Right cardiac atrium (tissue), 5 donors: ENCODE measurements at regions of chr2 and their contacts with region 1.

Region 1: GRCh38 chr2:29923110-29923721 is 1.8 kb upstream of the ALK start:
- DNase-seq: peak; percentile 60 to 84 (median 63)
- ATAC-seq: no peak
- H3K4me3 ChIP-seq: no peak overlapping the region
- H3K27ac ChIP-seq: no peak overlapping the region
- H3K4me1 ChIP-seq: peaks cover 5% of the 10 kb centered on the region
- H3K27me3 ChIP-seq: no peaks in the 10 kb centered on the region

Region 2: DNA sequence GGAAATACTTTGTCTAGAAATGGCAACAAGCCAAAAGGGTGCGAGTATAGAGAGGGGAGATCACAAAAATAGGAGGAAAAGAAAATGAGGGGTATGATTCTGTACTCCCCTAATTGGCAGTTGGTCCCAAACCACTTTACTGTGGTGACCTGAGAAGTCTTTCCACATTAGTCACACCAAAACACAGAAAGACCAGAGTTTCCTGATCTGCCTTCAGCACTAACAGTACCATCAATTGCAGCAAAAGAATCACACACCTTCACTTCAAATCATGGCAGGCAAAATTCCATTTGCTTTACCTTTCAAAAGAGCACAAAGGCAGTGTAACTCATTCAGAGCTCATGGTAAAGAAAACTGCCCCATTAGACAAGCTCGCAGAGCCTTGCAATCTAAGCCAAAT is 88.6 kb before region 1 on chr2:
- intact Hi-C with region 1: no loop called
- DNase-seq: no peak
- ATAC-seq: no peak
- H3K4me3 ChIP-seq: no peak overlapping the region
- H3K27ac ChIP-seq: no peak overlapping the region
- H3K4me1 ChIP-seq: no peaks in the 10 kb centered on the region
- H3K27me3 ChIP-seq: no peaks in the 10 kb centered on the region

Region 3: DNA sequence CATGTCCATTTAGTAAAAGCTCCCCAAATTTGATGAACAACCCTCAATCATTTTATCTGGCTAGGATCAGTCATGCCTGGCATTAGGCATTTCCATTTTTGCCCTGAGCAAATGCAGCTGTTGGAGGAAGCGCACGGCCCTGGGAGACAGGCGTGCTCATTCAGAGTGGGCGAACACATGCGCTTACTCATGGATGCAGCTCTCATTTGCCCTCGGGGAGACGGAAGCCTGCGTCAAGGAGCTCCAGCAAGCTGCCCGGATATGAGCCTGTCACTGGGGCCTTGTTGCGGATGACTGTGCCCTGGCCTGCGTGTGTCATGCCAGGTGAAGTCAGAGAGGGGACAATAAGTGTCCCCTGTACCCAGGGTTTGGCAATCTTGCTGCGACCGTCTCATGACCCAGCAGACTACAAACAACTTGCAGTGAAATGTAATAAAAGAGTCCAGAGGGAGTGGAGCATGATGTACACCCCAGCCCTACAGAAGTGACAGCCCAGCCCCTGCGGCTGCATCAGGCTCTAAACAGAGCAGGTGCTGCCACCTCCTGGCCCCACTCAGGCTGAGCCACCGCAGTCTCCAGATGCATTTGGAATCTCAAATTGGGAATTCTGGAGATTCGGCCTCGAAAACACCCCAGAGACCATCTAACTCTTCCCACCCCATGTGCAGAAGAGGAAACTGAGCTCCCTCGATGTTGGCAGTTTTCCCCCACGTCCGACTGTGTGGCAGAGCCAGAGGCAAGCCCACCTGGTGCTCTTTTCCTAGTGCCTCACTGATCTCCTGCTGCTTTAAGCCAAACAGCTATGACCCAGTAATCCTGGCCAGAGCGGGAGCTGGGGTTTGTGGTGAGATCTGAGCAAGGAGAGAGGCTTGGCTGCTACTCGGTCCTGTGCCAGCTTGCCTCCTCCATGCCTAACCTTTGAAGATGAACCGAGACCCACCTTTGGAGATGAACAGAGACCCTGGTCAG is 103.2 kb after region 1 on chr2:
- intact Hi-C with region 1: loop called in 3 of 4 experiments (anchors 5 kb)
- DNase-seq: peak; percentile 47 to 82 (median 76)
- ATAC-seq: peak; percentile 70 to 77
- H3K4me3 ChIP-seq: no peak overlapping the region
- H3K27ac ChIP-seq: no peak overlapping the region
- H3K4me1 ChIP-seq: no peaks in the 10 kb centered on the region
- H3K27me3 ChIP-seq: peaks cover 2% of the 10 kb centered on the region

Region 4: DNA sequence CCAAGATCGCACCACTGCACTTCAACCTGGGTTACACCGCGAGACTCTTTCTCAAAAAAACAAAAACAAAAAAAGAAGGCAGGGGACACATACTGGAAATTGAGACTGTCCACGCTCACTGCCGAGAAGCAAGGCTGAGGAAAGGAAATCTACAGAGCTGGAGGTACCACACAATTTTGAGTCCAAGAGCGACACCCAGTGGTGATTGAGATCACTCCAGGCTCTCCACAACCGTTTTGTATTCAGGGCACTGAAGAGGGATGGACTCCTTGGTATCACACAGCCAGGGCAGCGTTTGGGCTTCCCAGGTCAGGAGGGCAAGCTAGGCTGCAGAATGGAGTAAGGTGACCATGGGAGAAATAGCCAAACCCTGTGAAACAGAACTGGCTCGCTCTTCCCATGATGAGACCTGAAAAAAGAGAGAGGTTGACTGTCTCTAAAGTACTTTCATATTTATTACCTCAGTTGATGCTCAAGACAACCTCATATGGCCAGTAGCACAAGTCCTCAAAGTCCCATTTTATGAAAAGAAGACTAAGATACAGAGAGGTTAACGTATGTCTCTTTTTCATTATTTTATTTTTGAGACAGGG is 149.1 kb after region 1 on chr2:
- intact Hi-C with region 1: loop called in 1 of 4 experiments (anchors 5 kb)
- DNase-seq: peak in 2 of 3 donors; percentile 48 to 76
- ATAC-seq: peak; percentile 82 to 90
- H3K4me3 ChIP-seq: no peak overlapping the region
- H3K27ac ChIP-seq: no peak overlapping the region
- H3K4me1 ChIP-seq: no peaks in the 10 kb centered on the region
- H3K27me3 ChIP-seq: no peaks in the 10 kb centered on the region

Region 5: DNA sequence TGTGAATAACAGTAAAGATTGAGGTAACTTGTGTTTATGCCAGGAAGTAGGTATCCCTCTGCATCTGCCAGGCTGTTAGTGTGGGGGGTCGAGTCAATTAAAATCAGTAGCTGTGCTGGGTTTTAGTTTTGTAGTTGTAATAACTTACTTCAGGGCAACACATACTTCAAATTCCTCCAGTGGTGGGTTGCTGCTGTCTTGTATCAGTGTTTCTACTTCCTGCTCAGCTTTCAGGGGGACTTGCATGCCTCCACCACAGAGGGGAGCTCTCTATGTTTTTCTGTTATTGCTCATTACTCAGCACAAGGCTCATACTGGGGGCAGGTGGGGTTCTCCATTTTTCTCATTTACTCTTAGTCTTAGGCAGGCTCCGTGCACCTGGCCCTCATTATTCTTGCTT is 747.2 kb after region 1 on chr2:
- intact Hi-C with region 1: no loop called
- DNase-seq: no peak
- ATAC-seq: no peak
- H3K4me3 ChIP-seq: no peak overlapping the region
- H3K27ac ChIP-seq: no peak overlapping the region
- H3K4me1 ChIP-seq: no peaks in the 10 kb centered on the region
- H3K27me3 ChIP-seq: no peaks in the 10 kb centered on the region